ENCODE measurements at regions of chr17 and their contacts with region 1.

Region 1: DNA sequence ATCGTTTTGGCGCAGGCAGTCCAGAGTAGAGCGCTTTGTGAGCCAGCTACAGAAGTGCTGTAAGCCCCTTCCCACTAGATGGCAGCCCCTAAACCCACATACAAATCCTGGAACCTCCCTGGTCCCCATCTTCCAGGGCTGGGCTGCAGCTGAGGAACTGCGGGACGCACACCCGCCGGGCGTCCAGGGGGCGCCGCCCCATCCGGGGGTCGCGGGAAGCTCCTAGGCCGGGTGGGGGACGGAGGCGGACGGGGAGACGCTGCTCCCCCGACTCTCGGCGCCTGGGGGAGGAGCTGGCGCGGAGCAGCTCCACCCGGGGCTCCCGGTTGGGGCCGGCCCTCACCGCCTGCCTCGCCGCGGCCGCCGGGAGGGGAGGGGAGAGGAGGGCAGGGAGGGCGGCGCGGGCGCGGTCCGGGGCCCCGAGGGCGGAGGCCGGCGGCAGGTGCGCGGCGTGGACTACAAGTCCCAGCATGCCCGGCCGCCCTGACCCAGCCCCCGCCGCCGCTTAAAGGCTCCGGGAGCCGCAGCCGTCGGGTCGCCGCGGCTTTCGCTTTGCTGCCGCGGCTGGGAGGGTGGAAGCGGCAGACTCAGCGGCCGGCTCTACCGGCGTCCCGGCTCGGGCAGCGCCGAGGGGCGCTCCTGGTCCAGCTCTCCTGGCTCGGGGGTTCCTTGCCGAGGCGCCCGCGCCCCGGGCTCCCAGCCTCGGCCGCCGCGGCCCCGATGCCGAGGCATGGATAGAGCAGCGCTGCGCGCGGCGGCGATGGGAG is at the start of gene KSR1:
- DNase-seq: peak; percentile 71 to 91 (median 82)

Region 2: GRCh38 chr17:27181935-27182334 is 274.2 kb before region 1 on chr17:
- intact Hi-C with region 1: no loop called
- DNase-seq: no peak

Region 3: DNA sequence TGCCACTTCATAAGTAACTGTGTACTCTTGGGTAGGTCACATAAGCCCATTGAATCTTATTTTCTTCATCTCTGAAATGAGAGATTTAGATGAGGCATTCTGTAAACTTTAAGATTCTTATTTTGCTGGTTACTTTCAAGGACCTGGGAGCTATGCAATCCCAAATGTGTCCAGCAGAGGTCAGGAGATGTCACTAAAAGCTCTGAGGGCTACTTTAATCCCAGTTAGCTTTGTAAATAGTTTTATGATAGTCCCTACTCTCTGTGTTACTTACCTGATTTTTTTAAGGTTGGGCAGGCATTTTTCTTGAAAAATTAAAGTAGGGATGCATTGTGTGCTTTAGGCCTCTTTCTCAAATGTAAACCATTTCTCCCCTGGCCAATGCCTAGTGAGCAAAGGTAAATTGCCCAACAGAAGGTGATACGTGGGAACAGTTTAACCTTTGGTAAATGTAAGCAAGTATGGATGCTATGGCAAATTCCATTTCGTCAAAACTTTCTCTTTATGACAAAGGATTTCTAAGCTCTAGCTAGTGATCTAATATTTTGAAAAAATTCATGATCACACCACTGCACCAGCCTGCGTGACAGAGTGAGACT is 219.3 kb before region 1 on chr17:
- intact Hi-C with region 1: loop called (anchors 10 kb)
- DNase-seq: peak in 41 of 42 donors; percentile 29 to 94 (median 84)

Region 4: DNA sequence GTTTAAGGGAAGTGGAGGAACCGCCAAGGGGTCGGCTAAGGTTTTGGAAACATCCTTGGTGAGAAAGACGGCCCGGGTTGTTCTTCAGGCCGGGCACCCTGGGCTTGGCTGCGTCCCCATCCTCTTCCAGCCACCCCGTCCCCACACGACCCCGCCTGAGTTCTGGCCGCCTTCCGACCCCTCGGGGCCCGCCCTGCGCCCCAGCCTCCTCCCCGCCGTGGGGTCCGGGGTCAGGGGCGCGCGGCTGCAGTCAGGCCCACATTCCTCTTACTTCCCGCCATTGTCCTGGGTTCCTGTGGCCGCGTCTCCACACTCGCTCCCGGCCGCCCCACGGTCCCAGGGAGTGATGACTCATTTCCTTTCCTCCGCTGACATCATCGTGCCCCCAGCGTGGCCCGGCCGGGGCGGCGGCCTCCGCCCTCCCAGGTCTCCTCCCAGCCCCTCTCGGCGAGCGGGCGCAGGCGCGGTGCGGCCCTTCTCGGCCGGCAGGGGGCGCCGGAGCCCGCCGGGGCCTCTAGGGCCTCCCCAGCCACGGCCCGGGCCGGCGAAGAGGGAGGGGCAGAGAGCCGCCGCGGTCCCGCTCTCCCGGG is 102.5 kb before region 1 on chr17:
- intact Hi-C with region 1: loop called (anchors 10 kb)
- DNase-seq: peak; percentile 66 to 96 (median 88)

Region 5: DNA sequence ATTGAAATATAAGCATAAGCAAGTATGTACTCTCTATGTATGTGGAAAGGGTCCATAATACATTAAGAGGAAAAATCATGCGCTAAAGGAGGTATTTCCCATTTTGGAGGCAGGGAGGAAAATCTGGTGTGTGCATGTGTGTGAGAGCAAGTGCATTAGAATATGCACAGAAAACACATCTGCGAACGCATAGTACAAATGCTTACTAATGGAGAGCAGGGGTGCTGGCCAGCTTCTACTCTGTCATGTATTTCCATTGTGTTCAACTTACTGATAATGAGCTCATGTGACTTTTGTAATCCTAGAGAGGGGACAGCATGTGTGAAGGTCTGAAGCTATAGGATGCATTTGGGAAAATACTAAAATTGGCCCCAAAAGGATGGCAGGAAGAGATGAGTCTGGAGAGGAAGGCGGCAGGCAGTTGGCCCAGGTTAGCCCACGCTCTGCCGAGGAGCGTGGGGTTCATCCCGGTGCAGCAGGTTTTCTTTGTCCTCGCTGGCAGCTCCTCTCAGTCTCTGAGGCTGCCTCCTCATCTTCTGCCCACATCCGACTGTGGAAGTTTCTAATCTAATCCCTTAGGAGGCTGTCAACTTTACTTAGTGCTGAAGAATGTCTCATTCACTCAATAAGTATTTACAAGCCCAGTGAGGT is 17.6 kb before region 1 on chr17:
- intact Hi-C with region 1: no loop called
- DNase-seq: peak in 34 of 42 donors; percentile 16 to 86 (median 51)